CD8-positive, alpha-beta memory T cell (primary cell): ENCODE measurements at regions of chr9 and their contacts with region 1.

Region 1: GRCh38 chr9:36560857-36561221 is 11.9 kb upstream of the MELK start:
- DNase-seq: no peak
- H3K4me3 ChIP-seq: no peak overlapping the region
- H3K4me3 Mint-ChIP-seq: no peak overlapping the region
- H3K27ac ChIP-seq: no peak overlapping the region
- H3K27ac Mint-ChIP-seq: no peak overlapping the region
- H3K4me1 ChIP-seq: no peaks in the 10 kb centered on the region
- H3K4me1 Mint-ChIP-seq: peaks cover 0 to under 1% (median under 1%) of the 10 kb centered on the region in 3 donors
- H3K27me3 ChIP-seq: no peaks in the 10 kb centered on the region
- H3K27me3 Mint-ChIP-seq: peaks cover 0 to 5% of the 10 kb centered on the region in 2 donors

Region 2: GRCh38 chr9:36400332-36401163 is 160.3 kb before region 1 on chr9:
- CTCF ChIA-PET with region 1: interaction called, 236 read pairs
- POLR2A ChIA-PET with region 1: no interaction called
- DNase-seq: peak; percentile 89 to 92 (median 90)
- H3K4me3 ChIP-seq: peak overlapping the region; percentile 79
- H3K4me3 Mint-ChIP-seq: peak overlapping the region; percentile 89 to 98 (median 94)
- H3K27ac ChIP-seq: peak overlapping the region; percentile 96
- H3K27ac Mint-ChIP-seq: peak overlapping the region; percentile 97 to 99 (median 98)
- H3K4me1 ChIP-seq: peaks cover 36% of the 10 kb centered on the region
- H3K4me1 Mint-ChIP-seq: peaks cover 44 to 57% (median 55%) of the 10 kb centered on the region in 3 donors
- H3K27me3 ChIP-seq: no peaks in the 10 kb centered on the region
- H3K27me3 Mint-ChIP-seq: peaks cover 0 to 1% of the 10 kb centered on the region in 2 donors

Region 3: DNA sequence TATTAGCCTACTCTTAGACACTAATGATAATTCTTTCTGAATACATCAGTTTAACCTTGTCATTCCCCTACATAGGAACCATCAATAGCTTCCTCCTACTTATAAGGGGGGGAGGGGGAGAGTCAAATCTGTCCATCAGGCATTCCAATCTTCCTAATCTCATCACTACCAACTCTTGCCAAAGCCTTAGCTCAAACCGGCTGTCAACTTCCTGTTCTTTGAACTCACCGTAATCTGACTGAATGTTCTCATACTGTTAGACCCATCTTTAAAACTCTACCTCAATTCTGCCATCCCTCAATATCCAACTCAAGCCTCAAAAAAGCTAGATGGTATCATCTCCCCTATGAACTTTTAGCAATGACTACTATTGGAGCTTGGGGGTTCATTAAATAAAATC is 118.9 kb before region 1 on chr9:
- CTCF ChIA-PET with region 1: interaction called, 14 read pairs
- POLR2A ChIA-PET with region 1: no interaction called
- DNase-seq: peak in 1 of 5 donors; percentile 12
- H3K4me3 ChIP-seq: no peak overlapping the region
- H3K4me3 Mint-ChIP-seq: peak overlapping the region in 3 of 7 donors; percentile 1 to 28 (median 1)
- H3K27ac ChIP-seq: no peak overlapping the region
- H3K27ac Mint-ChIP-seq: peak overlapping the region in 6 of 8 donors; percentile 0 to 35 (median 18)
- H3K4me1 ChIP-seq: peaks cover 46% of the 10 kb centered on the region
- H3K4me1 Mint-ChIP-seq: peaks cover 63 to 78% (median 78%) of the 10 kb centered on the region in 3 donors
- H3K27me3 ChIP-seq: no peaks in the 10 kb centered on the region
- H3K27me3 Mint-ChIP-seq: no peaks in the 10 kb centered on the region